ENCODE measurements at regions of chr3 and their contacts with region 1.

Region 1: DNA sequence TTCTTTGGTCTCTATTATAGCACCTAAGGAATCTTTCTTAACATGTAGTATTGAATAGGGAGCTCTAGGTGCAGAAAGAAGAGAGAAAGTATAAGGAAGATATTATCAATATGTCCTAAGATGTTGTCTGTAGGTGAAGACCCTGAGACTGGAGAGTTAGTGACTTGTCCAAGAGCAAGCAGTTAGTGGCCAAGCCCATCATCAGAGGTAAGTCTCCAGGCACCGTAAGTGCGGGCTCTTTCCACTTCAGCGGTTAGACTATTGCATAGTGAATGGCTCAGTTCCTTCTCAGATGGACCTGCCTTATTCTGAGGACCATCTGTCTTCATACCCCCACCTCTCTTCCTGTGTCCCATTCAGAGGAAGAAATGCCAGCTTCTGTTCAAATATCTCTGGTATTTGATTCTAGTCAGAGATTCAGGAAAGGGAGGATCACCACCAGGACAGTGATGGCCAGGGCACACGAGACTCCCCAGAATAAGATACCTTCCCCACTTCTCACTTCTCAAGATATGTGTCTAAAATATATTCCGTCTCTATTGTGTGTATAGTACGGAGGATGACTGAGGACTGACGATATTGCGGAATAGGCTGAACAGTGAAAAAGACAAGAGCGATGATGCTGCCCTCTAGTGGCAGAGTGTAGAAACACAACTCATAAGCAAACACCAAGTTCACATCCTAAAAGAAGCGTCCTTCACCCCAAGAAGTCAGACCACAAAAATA is 19.1 kb upstream of the ADGRG7 start:
- DNase-seq: peak in 1 of 2 donors; percentile 86
- ATAC-seq: peak; percentile 90 to 96 (median 91)
- H3K4me3 ChIP-seq: no peak overlapping the region
- H3K4me3 Mint-ChIP-seq: no peak overlapping the region
- H3K27ac ChIP-seq: no peak overlapping the region
- H3K27ac Mint-ChIP-seq: no peak overlapping the region
- H3K4me1 ChIP-seq: peaks cover 3% of the 10 kb centered on the region
- H3K4me1 Mint-ChIP-seq: no peaks in the 10 kb centered on the region
- H3K27me3 ChIP-seq: no peaks in the 10 kb centered on the region
- H3K27me3 Mint-ChIP-seq: no peaks in the 10 kb centered on the region
- CTCF ChIP-seq: peak; percentile 92

Region 2: DNA sequence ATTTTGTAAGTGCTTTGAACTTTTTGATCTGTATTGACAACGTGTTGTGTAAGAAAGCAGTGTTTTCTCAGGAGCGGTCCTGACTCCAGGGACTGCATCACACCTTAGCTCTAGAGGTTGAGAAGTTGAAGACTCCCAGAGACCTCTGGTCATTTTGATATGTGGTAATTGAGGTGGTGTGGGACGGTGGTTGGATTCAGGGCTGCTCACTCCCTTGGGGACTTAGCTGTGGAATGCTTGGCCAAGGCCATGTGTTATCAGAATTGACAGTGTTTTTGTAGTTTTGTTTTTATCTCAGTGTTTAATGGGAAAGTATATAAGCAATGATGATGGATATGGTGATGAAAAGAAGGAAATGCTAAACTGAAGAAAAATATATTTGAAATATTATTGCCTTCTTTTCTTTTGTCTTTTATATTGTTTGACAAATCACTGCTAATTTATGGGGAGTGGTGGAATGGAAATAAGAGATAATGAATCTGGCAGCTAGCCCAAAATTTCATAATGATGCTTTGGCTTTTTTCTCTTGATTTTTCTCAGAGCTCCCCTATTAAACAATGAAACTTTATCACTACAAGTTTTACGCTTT is 756.6 kb before region 1 on chr3:
- intact Hi-C with region 1: loop called (anchors 1 kb)
- DNase-seq: no peak
- ATAC-seq: no peak
- H3K4me3 ChIP-seq: no peak overlapping the region
- H3K4me3 Mint-ChIP-seq: no peak overlapping the region
- H3K27ac ChIP-seq: no peak overlapping the region
- H3K27ac Mint-ChIP-seq: no peak overlapping the region
- H3K4me1 ChIP-seq: no peaks in the 10 kb centered on the region
- H3K4me1 Mint-ChIP-seq: no peaks in the 10 kb centered on the region
- H3K27me3 ChIP-seq: no peaks in the 10 kb centered on the region
- H3K27me3 Mint-ChIP-seq: no peaks in the 10 kb centered on the region
- CTCF ChIP-seq: no peak

Region 3: GRCh38 chr3:100068826-100069225 is 521.5 kb before region 1 on chr3:
- intact Hi-C with region 1: loop called (anchors 5 kb)
- DNase-seq: peak; percentile 61 to 84
- ATAC-seq: peak; percentile 87 to 92 (median 88)
- H3K4me3 ChIP-seq: no peak overlapping the region
- H3K4me3 Mint-ChIP-seq: no peak overlapping the region
- H3K27ac ChIP-seq: no peak overlapping the region
- H3K27ac Mint-ChIP-seq: peak overlapping the region in 1 of 2 donors; percentile 58
- H3K4me1 ChIP-seq: peaks cover 19% of the 10 kb centered on the region
- H3K4me1 Mint-ChIP-seq: peaks cover 35 to 40% of the 10 kb centered on the region in 2 donors
- H3K27me3 ChIP-seq: no peaks in the 10 kb centered on the region
- H3K27me3 Mint-ChIP-seq: no peaks in the 10 kb centered on the region
- CTCF ChIP-seq: peak; percentile 82

Region 4: DNA sequence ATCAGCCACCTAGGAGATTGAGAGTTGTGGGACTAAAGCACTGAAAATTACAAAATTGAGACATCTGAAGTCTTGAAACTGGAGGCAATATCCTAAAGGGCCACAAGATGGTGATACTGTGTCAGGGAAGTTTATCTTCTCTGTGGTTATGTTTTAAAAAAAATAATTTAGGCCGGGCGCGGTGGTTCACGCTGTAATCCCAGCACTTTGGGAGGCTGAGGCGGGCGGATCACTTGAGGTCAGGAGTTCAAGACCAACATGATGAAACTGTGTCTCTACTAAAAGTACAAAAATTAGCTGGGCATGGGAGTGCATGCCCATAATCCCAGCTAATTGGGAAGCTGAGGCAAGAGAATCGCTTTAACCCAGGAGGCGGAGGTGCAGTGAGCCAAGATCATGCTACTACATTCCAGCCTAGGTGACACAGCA is 273.6 kb before region 1 on chr3:
- intact Hi-C with region 1: loop called (anchors 1 kb)
- DNase-seq: peak in 1 of 2 donors; percentile 77
- ATAC-seq: peak; percentile 79 to 92 (median 92)
- H3K4me3 ChIP-seq: no peak overlapping the region
- H3K4me3 Mint-ChIP-seq: no peak overlapping the region
- H3K27ac ChIP-seq: no peak overlapping the region
- H3K27ac Mint-ChIP-seq: peak overlapping the region; percentile 69 to 79
- H3K4me1 ChIP-seq: peaks cover 4% of the 10 kb centered on the region
- H3K4me1 Mint-ChIP-seq: peaks cover 11 to 13% of the 10 kb centered on the region in 2 donors
- H3K27me3 ChIP-seq: no peaks in the 10 kb centered on the region
- H3K27me3 Mint-ChIP-seq: no peaks in the 10 kb centered on the region
- CTCF ChIP-seq: peak; percentile 77

Measured in natural killer cell (primary cell).